Spleen (tissue), 13 donors: ENCODE measurements at regions of chr12 and their contacts with region 1.

Region 1: DNA sequence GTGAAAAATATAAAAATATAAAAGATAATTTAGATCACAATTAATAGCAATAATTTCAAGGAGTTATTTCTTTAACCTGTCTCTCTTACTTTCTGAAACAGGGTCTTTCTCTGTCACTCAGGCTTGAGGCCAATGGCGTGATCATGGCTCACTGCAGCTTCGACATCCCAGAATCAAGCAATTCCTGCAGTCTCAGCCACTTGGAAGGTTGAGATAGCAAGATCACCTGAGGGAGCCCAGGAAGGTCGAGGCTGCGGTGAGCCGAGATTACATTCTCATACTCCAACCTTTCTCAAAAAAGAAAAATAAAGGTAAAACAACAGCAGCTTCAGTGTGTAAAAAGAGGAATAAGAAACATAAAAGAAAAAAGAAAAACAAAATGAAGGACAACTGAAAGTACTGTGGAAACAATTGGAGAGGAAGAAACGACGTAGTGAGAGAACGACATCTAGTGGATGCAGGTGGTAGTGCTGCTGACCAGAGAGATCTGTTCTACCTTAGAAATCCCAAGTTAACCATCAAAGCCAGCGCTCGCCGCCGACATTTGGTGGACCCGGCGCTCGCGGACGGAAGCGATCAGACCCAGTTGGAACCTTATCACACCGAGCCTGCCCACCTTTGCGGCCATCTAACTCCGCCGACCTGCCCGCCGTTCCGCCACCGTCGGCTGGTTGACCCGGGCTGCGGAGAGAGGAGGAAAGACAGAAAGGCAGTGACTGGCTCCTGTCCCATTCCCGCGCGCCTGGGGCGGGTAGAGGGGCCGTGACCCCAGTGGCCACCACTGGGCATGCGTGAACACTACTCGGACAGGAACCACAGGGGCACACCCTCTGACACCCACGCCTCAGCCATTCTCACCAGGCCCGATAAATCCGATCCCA is 196.1 kb downstream of the ALG10 start:
- DNase-seq: peak; percentile 82
- H3K4me3 ChIP-seq: peak overlapping the region; percentile 20 to 64 (median 34)
- H3K27ac ChIP-seq: peak overlapping the region in 7 of 8 donors; percentile 19 to 79 (median 74)
- H3K4me1 ChIP-seq: peaks cover 0 to 17% (median 10%) of the 10 kb centered on the region in 6 donors
- H3K27me3 ChIP-seq: peaks cover 0 to 20% (median 8%) of the 10 kb centered on the region in 7 donors
- CTCF ChIP-seq: peak; percentile 79 to 96 (median 88)
- POLR2A ChIP-seq: no peak

Region 2: GRCh38 chr12:34119366-34119765 is 99.0 kb before region 1 on chr12:
- intact Hi-C with region 1: loop called (anchors 5 kb)
- DNase-seq: no peak
- H3K4me3 ChIP-seq: no peak overlapping the region
- H3K27ac ChIP-seq: no peak overlapping the region
- H3K4me1 ChIP-seq: no peaks in the 10 kb centered on the region
- H3K27me3 ChIP-seq: no peaks in the 10 kb centered on the region
- CTCF ChIP-seq: no peak
- POLR2A ChIP-seq: no peak